ENCODE measurements at regions of chr1 and their contacts with region 1.

Region 1: DNA sequence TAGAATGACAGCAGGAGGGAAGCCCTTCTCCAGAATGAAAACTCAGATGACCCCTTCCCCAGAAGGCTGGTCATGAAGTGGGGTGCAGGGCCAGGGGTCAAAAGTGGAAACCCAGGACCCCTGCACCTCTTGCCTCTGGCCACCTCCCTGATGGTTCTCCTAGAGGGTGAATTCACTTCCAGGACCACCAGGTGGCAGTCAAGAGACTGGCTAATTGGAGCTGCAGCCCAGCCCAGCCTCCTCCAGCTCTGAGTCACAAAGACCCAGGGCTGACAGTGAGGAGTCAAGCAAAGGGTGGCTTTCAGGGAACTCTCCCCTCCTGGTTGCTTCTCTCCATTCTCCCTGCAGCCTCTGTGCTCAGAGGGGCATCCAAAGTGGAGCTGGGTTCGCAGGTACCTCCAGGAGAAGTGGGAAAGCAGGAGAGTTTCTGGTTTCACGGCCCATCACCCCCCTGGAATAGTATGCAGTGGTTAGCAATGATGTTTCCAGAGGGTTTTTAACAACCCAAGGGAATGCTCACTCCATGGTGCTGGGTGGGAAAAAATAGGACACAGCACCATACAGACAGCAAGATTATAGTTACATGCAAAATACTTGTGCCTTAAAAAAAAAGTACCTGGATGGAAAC is 6.1 kb upstream of the EPHB2 start:
- DNase-seq: peak; percentile 85 to 88 (median 87)
- ATAC-seq: peak; percentile 99
- H3K4me3 ChIP-seq: no peak overlapping the region
- H3K27ac ChIP-seq: no peak overlapping the region
- H3K4me1 ChIP-seq: peaks cover 0 to under 1% of the 10 kb centered on the region in 2 experiments; a peak in 2 of 5 replicates
- H3K27me3 ChIP-seq: peaks cover 0 to 17% of the 10 kb centered on the region in 2 experiments; a peak in 1 of 5 replicates
- CTCF ChIP-seq: peak; percentile 92 to 93 (median 93)
- EP300 ChIP-seq: no peak
- POLR2A ChIP-seq: no peak
- RAD21 ChIP-seq: peak; percentile 74 to 90

Region 2: GRCh38 chr1:22731924-22732720 is 27.6 kb after region 1 on chr1:
- CTCF ChIA-PET with region 1: interaction called, 5 read pairs
- POLR2A ChIA-PET with region 1: interaction called, 6 read pairs
- in situ Hi-C with region 1: no loop called
- intact Hi-C with region 1: loop called (anchors 2 kb)
- DNase-seq: peak in 3 of 4 experiments; percentile 39 to 56 (median 47)
- ATAC-seq: peak; percentile 76
- H3K4me3 ChIP-seq: no peak overlapping the region
- H3K27ac ChIP-seq: no peak overlapping the region
- H3K4me1 ChIP-seq: peaks cover 0 to 6% of the 10 kb centered on the region in 2 experiments; a peak in 1 of 5 replicates
- H3K27me3 ChIP-seq: peaks cover 20 to 63% of the 10 kb centered on the region in 2 experiments; a peak in 4 of 5 replicates
- CTCF ChIP-seq: peak; percentile 55 to 64 (median 62)
- EP300 ChIP-seq: no peak
- POLR2A ChIP-seq: no peak
- RAD21 ChIP-seq: peak in 1 of 2 experiments; percentile 57; a peak in 2 of 4 replicates

Region 3: GRCh38 chr1:22861764-22862440 is 157.3 kb after region 1 on chr1:
- CTCF ChIA-PET with region 1: interaction called, 14 read pairs
- POLR2A ChIA-PET with region 1: no interaction called
- in situ Hi-C with region 1: no loop called
- intact Hi-C with region 1: no loop called
- DNase-seq: peak; percentile 45 to 83 (median 78)
- ATAC-seq: peak; percentile 86
- H3K4me3 ChIP-seq: no peak overlapping the region
- H3K27ac ChIP-seq: no peak overlapping the region
- H3K4me1 ChIP-seq: no peaks in the 10 kb centered on the region
- H3K27me3 ChIP-seq: peaks cover 19 to 67% of the 10 kb centered on the region in 2 experiments
- CTCF ChIP-seq: peak; percentile 83 to 92 (median 90)
- EP300 ChIP-seq: no peak
- POLR2A ChIP-seq: no peak
- RAD21 ChIP-seq: peak; percentile 41 to 72; a peak in 3 of 4 replicates

Region 4: GRCh38 chr1:22889213-22889827 is 184.8 kb after region 1 on chr1:
- CTCF ChIA-PET with region 1: interaction called, 4 read pairs
- POLR2A ChIA-PET with region 1: no interaction called
- in situ Hi-C with region 1: no loop called
- intact Hi-C with region 1: loop called (anchors 5 kb)
- DNase-seq: peak; percentile 39 to 57 (median 55)
- ATAC-seq: peak; percentile 88
- H3K4me3 ChIP-seq: no peak overlapping the region
- H3K27ac ChIP-seq: no peak overlapping the region
- H3K4me1 ChIP-seq: 0 out of 5 replicates have a peak, but pooled peaks cover 0 to 5% of the 10 kb centered on the region in 2 experiments
- H3K27me3 ChIP-seq: peaks cover 10 to 35% of the 10 kb centered on the region in 2 experiments; a peak in 3 of 5 replicates
- CTCF ChIP-seq: peak; percentile 62 to 82 (median 79)
- EP300 ChIP-seq: no peak
- POLR2A ChIP-seq: no peak
- RAD21 ChIP-seq: peak in 1 of 2 experiments; percentile 80; a peak in 3 of 4 replicates

Region 5: GRCh38 chr1:22930235-22930912 is 225.8 kb after region 1 on chr1:
- CTCF ChIA-PET with region 1: interaction called, 5 read pairs
- POLR2A ChIA-PET with region 1: interaction called, 3 read pairs
- in situ Hi-C with region 1: no loop called
- intact Hi-C with region 1: loop called (anchors 1 kb)
- DNase-seq: peak; percentile 75 to 91 (median 90)
- ATAC-seq: peak; percentile 98
- H3K4me3 ChIP-seq: no peak overlapping the region
- H3K27ac ChIP-seq: no peak overlapping the region
- H3K4me1 ChIP-seq: no peaks in the 10 kb centered on the region; a peak in 1 of 5 replicates
- H3K27me3 ChIP-seq: peaks cover 23 to 55% of the 10 kb centered on the region in 2 experiments
- CTCF ChIP-seq: peak; percentile 89 to 93 (median 91)
- EP300 ChIP-seq: no peak
- POLR2A ChIP-seq: no peak
- RAD21 ChIP-seq: peak; percentile 71 to 91

Region 6: GRCh38 chr1:23019094-23019862 is 314.7 kb after region 1 on chr1 and contains the start of gene KDM1A:
- CTCF ChIA-PET with region 1: no interaction called
- POLR2A ChIA-PET with region 1: no interaction called
- in situ Hi-C with region 1: no loop called
- intact Hi-C with region 1: no loop called
- DNase-seq: peak; percentile 92 to 100 (median 94)
- ATAC-seq: peak; percentile 97
- H3K4me3 ChIP-seq: peak within 1 kb of the TSS; percentile 94
- H3K27ac ChIP-seq: peak within 1 kb of the TSS; percentile 91
- H3K4me1 ChIP-seq: peaks cover 7 to 8% of the 10 kb centered on the region in 2 experiments; a peak in 4 of 5 replicates
- H3K27me3 ChIP-seq: no peaks in the 10 kb centered on the region
- CTCF ChIP-seq: peak; percentile 48 to 60 (median 53)
- EP300 ChIP-seq: peak; percentile 84
- POLR2A ChIP-seq: peak; percentile 97
- RAD21 ChIP-seq: no peak
- polyA plus RNA-seq, gene KDM1A: 59.2 to 70.3 TPM

Region 7: DNA sequence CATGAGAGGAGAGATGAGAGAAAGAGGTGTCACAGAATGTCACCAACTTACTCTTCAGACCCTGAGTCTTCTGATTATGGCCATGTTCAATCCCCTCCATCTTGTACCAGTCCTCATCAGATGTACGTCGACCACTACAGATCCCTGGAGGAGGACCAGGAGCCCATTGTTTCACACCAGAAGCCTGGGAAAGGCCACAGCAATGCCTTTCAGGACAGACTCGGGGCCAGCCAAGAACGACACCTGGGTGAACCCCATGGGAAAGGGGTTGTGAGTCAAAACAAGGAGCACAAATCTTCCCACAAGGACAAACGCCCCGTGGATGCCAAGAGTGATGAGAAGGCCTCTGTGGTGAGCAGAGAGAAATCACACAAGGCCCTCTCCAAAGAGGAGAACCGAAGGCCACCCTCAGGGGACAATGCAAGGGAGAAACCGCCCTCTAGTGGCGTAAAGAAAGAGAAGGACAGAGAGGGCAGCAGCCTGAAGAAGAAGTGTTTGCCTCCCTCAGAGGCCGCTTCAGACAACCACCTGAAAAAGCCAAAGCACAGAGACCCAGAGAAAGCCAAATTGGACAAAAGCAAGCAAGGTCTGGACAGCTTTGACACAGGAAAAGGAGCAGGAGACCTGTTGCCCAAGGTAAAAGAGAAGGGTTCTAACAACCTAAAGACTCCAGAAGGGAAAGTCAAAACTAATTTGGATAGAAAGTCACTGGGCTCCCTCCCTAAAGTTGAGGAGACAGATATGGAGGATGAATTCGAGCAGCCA is 1046.7 kb after region 1 on chr1:
- CTCF ChIA-PET with region 1: no interaction called
- POLR2A ChIA-PET with region 1: no interaction called
- in situ Hi-C with region 1: no loop called
- intact Hi-C with region 1: no loop called
- DNase-seq: peak; percentile 63 to 77 (median 70)
- ATAC-seq: peak; percentile 95
- H3K4me3 ChIP-seq: no peak overlapping the region
- H3K27ac ChIP-seq: no peak overlapping the region
- H3K4me1 ChIP-seq: peaks cover 0 to 11% of the 10 kb centered on the region in 2 experiments; a peak in 2 of 5 replicates
- H3K27me3 ChIP-seq: no peaks in the 10 kb centered on the region
- CTCF ChIP-seq: peak; percentile 79 to 90 (median 87)
- EP300 ChIP-seq: no peak
- POLR2A ChIP-seq: no peak
- RAD21 ChIP-seq: peak; percentile 47 to 79; a peak in 3 of 4 replicates